IMR-90 (cell line): ENCODE measurements at regions of chr6 and their contacts with region 1.

Region 1: GRCh38 chr6:134161036-134161435 is 108.6 kb upstream of the SLC2A12 start:
- DNase-seq: peak; percentile 45
- ATAC-seq: no peak
- H3K4me3 ChIP-seq: no peak overlapping the region
- H3K27ac ChIP-seq: no peak overlapping the region
- H3K4me1 ChIP-seq: no peaks in the 10 kb centered on the region; the same call in 1 of the 2 replicates
- H3K27me3 ChIP-seq: no peaks in the 10 kb centered on the region
- CTCF ChIP-seq: no peak
- POLR2A ChIP-seq: no peak
- RAD21 ChIP-seq: no peak

Region 2: DNA sequence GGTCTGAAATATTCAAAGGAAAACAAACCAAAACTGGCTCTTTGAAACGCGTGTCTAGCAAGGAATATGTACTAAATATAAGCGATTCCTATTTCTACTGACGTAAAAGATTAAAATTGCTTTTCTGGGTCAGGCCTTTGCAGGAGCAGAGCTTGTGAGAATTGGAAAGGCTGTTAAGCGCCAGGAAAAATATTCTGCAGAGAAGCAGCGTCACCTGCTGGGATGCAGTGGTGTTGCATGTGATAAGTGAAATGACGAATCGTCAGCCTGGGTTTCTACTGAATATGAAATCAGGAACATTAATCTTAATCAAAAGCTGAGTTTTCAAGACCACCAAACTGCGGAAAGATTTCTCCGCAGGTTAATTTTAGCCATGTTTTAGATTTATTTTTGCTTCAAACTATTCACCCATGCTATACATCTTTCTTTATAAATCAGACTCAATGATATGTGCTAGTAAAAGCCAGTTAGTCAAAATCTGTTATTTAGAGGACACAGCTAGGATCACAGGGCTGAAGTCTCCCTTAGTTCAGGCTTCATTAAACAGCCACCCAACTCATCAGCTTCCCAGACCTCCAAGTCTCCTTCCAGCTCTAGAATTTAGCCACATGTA is 721.5 kb after region 1 on chr6:
- CTCF ChIA-PET with region 1: interaction called, 4 read pairs
- POLR2A ChIA-PET with region 1: no interaction called
- dilution Hi-C with region 1: no loop called
- in situ Hi-C with region 1: no loop called
- intact Hi-C with region 1: loop called (anchors 1 kb)
- DNase-seq: peak; percentile 79
- ATAC-seq: peak; percentile 89
- H3K4me3 ChIP-seq: no peak overlapping the region
- H3K27ac ChIP-seq: peak overlapping the region; percentile 44; the same call in 1 of the 2 replicates
- H3K4me1 ChIP-seq: peaks cover 6% of the 10 kb centered on the region
- H3K27me3 ChIP-seq: no peaks in the 10 kb centered on the region
- CTCF ChIP-seq: peak; percentile 91
- POLR2A ChIP-seq: no peak
- RAD21 ChIP-seq: peak; percentile 95

Region 3: DNA sequence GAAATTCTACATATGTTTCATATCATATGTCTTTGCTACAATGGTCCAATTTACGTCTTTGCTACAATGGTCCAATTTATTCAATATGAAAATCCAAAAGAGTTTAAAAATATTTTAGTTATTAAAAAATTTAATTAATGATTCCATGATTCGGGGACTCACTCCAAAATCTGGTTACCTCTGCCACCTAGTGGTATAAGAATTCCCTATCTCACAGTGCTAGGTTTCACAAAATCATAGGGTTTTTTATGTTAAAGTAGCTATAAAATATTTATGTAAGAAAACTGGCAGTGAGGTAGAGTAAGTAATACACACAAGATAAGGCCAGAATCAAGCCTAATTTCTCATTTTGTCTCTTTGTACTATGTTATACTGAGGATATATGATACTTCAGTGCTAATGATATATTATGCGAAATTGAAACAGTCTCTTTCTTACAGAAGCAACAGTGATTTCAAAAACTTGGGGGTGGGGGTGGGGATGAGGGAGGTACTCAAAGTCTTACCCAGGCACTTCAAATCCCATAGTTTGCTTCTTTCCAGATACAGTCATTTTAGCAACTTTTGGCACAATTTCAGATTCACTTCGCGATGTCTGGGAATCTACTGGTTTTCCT is 841.3 kb after region 1 on chr6:
- CTCF ChIA-PET with region 1: no interaction called
- POLR2A ChIA-PET with region 1: no interaction called
- dilution Hi-C with region 1: no loop called
- in situ Hi-C with region 1: no loop called
- intact Hi-C with region 1: loop called (anchors 2 kb)
- DNase-seq: peak; percentile 40
- ATAC-seq: no peak
- H3K4me3 ChIP-seq: no peak overlapping the region
- H3K27ac ChIP-seq: no peak overlapping the region
- H3K4me1 ChIP-seq: no peaks in the 10 kb centered on the region
- H3K27me3 ChIP-seq: no peaks in the 10 kb centered on the region
- CTCF ChIP-seq: peak; percentile 54
- POLR2A ChIP-seq: no peak
- RAD21 ChIP-seq: peak; percentile 44